ENCODE measurements at regions of chr11 and their contacts with region 1.

Region 1: GRCh38 chr11:62805076-62805892 is at the start of gene NXF1:
- DNase-seq: peak; percentile 96
- H3K4me3 Mint-ChIP-seq: peak within 1 kb of the TSS; percentile 90
- H3K27ac Mint-ChIP-seq: peak within 1 kb of the TSS; percentile 86
- H3K4me1 Mint-ChIP-seq: peaks cover 40% of the 10 kb centered on the region
- H3K27me3 Mint-ChIP-seq: no peaks in the 10 kb centered on the region
- total RNA-seq, gene NXF1: 80.3 to 82.4 TPM

Region 2: DNA sequence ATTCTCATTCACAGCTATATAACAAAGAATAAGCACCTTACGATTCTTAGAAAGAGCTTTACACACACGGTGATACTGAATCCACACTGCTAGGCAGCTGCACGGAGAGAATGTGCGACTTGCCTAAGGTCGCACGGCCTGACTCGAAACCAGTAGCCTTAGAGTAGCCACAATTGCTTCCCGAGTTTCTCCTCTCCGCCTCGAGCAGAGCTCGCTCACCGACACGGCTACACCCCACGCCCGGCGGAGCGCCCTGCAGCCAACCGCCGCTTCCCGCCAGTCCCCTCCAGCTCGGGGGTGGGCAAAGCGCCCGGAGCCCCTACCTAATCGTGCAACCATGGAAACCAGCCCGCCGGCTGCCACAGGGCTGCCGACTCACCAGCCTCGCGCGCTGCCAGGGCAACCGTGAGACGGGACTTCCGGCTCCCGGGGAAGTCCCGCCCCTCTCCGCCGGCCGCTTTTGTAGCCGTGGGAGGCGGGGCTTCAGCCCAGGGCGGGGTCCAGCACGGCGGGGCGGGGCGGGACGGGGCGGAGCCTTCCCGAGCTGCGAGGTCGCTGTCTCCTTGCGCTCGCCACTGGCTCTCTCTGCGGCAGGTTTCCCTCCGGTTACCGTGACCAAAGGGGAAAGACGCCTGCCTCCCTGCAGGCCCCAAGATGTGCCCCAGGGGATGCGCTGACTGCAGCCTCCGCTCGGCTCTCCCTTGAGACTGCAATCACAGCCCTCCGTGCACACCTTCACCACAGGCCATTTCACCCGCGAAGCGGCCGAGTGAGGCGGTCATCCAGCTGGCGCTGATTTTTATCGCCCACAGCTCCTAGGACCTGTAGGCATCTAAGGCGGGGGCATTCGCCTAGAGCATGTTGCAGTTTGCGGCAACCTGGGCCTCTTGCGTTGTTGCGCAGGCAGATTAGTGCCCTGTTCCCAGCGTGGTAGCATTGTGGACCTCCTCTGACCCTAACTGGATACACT is 99.1 kb before region 1 on chr11:
- CTCF ChIA-PET with region 1: interaction called, 4 read pairs
- POLR2A ChIA-PET with region 1: interaction called, 12 read pairs
- DNase-seq: peak; percentile 96
- H3K4me3 Mint-ChIP-seq: peak overlapping the region; percentile 92
- H3K27ac Mint-ChIP-seq: peak overlapping the region; percentile 69
- H3K4me1 Mint-ChIP-seq: peaks cover 56% of the 10 kb centered on the region
- H3K27me3 Mint-ChIP-seq: no peaks in the 10 kb centered on the region

Region 3: DNA sequence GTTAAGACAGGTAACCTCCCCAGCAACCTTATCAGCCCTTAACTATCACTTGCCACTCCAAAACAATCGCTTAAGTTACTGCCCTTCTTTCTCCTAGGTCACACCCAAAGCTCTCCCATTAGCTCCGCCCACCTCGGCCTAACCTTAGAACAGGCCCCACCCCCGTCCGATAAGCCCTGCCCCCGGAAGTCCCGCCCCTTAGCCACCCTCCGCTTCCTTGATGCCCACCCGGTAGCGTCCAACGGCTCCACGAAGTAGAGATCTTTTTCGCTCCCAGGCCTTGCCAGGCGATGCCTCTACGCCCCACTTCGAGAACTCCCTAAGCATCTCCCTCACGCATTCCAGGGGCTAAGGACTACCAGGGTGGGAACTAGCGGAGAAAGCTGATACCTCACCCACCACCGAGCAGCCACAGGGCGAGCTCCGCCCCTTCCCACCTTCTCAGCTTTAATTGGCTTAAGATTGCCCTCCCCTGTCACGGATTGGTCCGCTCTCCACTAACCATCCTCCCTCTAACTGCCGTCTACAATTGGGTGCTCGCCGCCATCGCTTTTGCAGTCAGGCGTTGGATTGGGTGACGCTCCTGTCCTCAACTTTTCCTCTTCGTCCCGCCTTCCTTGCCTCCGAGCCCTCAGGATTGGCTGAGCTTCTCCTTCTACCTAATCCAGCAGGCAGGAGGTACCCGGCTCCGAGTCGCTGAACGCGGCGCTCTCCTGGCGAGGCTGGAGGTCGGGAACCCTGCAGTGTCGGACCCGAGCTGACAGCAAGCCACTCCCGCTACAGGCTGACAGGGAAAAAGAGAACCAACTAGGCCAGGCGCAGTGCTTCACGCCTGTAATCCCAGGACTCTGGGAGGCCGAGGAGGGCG is 51.3 kb before region 1 on chr11 and contains the start of gene ZBTB3:
- CTCF ChIA-PET with region 1: no interaction called
- POLR2A ChIA-PET with region 1: interaction called, 10 read pairs
- DNase-seq: peak; percentile 97
- H3K4me3 Mint-ChIP-seq: peak within 1 kb of the TSS; percentile 95
- H3K27ac Mint-ChIP-seq: peak within 1 kb of the TSS; percentile 93
- H3K4me1 Mint-ChIP-seq: peaks cover 33% of the 10 kb centered on the region
- H3K27me3 Mint-ChIP-seq: no peaks in the 10 kb centered on the region
- total RNA-seq, gene ZBTB3: 13.3 to 13.4 TPM

Region 4: GRCh38 chr11:62771144-62772021 is 33.9 kb before region 1 on chr11 and contains the start of gene TAF6L:
- CTCF ChIA-PET with region 1: no interaction called
- POLR2A ChIA-PET with region 1: interaction called, 10 read pairs
- DNase-seq: peak; percentile 96
- H3K4me3 Mint-ChIP-seq: peak within 1 kb of the TSS; percentile 87
- H3K27ac Mint-ChIP-seq: peak within 1 kb of the TSS; percentile 88
- H3K4me1 Mint-ChIP-seq: peaks cover 30% of the 10 kb centered on the region
- H3K27me3 Mint-ChIP-seq: no peaks in the 10 kb centered on the region
- total RNA-seq, gene TAF6L: 15.2 to 16.0 TPM

Region 5: DNA sequence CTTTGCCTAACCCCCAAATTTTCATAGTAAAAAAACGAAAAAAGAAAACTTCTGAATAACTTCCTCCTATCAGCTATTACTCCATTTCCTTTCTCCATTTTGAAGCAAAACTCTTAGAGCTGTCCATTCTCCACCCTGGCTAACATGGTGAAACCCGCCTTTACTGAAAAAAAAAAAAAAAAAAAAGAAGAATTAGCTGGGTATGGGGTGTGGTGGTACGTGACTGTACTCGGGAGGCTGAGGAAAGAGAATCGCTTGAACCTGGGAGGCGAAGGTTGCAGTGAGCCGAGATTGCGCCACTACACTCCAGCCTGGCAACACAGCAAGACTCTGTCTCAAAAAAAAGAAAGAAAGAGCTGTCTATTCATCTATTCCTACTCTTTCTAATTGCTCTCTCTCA is 11.3 kb after region 1 on chr11:
- CTCF ChIA-PET with region 1: interaction called, 4 read pairs
- POLR2A ChIA-PET with region 1: interaction called, 23 read pairs
- DNase-seq: no peak
- H3K4me3 Mint-ChIP-seq: no peak overlapping the region
- H3K27ac Mint-ChIP-seq: no peak overlapping the region
- H3K4me1 Mint-ChIP-seq: peaks cover 6% of the 10 kb centered on the region
- H3K27me3 Mint-ChIP-seq: no peaks in the 10 kb centered on the region

Region 6: GRCh38 chr11:62823677-62824076 is 18.4 kb after region 1 on chr11:
- CTCF ChIA-PET with region 1: interaction called, 4 read pairs
- POLR2A ChIA-PET with region 1: interaction called, 35 read pairs
- DNase-seq: no peak
- H3K4me3 Mint-ChIP-seq: no peak overlapping the region
- H3K27ac Mint-ChIP-seq: no peak overlapping the region
- H3K4me1 Mint-ChIP-seq: peaks cover 11% of the 10 kb centered on the region
- H3K27me3 Mint-ChIP-seq: no peaks in the 10 kb centered on the region

Region 7: DNA sequence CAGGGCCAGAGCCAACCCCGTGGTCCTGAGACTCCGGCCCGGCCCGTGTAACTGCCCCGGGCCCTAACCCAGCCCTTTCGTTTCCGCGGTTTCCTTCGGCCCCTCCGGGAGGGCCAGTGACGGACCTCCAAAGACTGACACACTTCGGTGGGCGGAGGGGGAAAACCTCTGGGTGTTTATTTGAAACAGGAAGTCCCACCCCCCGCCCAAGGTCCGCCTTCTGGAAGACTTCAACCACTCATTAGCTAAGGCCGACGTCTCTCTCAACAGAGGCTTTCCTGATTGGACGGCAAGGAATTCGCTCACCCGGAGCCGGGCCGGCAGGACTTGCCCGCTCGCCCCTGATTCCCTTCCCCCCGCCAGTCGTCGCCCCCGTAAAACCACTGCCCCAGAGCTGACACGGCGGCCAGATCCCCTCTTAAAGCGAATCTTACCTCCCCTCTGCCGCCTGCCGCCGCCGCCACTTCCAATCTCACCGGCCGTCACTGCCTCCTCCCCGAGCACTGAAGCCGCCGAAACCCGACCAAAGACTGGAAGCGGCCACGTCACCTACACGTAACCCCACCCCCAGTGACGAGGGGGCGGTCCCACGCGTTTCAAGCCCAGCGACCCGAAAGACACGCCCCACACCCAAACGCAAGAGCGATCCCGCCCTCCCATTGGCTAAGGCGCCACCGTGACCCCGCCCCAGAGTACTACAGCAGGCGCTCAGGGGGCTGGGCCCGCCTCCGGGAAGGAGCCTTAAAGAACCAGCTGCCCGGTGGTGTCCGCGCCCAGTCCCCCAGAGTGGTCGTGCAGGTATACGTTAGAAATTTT is 26.4 kb after region 1 on chr11 and contains the start of gene STX5:
- CTCF ChIA-PET with region 1: interaction called, 3 read pairs
- POLR2A ChIA-PET with region 1: interaction called, 44 read pairs
- DNase-seq: peak; percentile 100
- H3K4me3 Mint-ChIP-seq: peak within 1 kb of the TSS; percentile 84
- H3K27ac Mint-ChIP-seq: peak within 1 kb of the TSS; percentile 91
- H3K4me1 Mint-ChIP-seq: peaks cover 33% of the 10 kb centered on the region
- H3K27me3 Mint-ChIP-seq: no peaks in the 10 kb centered on the region
- total RNA-seq, gene STX5: 40.6 to 41.6 TPM

Measured in activated CD4-positive, alpha-beta memory T cell treated with anti-CD3 and anti-CD28 coated beads, Interleukin-2, amount 10 ng/mL, durations not matched to agents 7 days and 5 days (primary cell).